Mammary epithelial cell (primary cell): ENCODE measurements at regions of chr21 and their contacts with region 1.

Region 1: GRCh38 chr21:41425954-41426675 is at the start of gene MX1:
- DNase-seq: peak; percentile 31
- H3K4me3 ChIP-seq: peak within 1 kb of the TSS; percentile 60 to 64 (median 62)
- H3K27ac ChIP-seq: no peak within 1 kb of the TSS
- H3K4me1 ChIP-seq: peaks cover 6% of the 10 kb centered on the region
- H3K27me3 ChIP-seq: no peaks in the 10 kb centered on the region
- CTCF ChIP-seq: no peak
- total RNA-seq, gene MX1: 5.3 to 10.8 TPM

Region 2: GRCh38 chr21:41133896-41134522 is 292.1 kb before region 1 on chr21:
- CTCF ChIA-PET with region 1: no interaction called
- dilution Hi-C with region 1: no loop called
- in situ Hi-C with region 1: loop called in 1 of 2 experiments (anchors 25 kb)
- intact Hi-C with region 1: no loop called
- DNase-seq: peak; percentile 23
- H3K4me3 ChIP-seq: no peak overlapping the region
- H3K27ac ChIP-seq: no peak overlapping the region
- H3K4me1 ChIP-seq: peaks cover 3% of the 10 kb centered on the region
- H3K27me3 ChIP-seq: no peaks in the 10 kb centered on the region
- CTCF ChIP-seq: peak; percentile 53 to 68

Region 3: DNA sequence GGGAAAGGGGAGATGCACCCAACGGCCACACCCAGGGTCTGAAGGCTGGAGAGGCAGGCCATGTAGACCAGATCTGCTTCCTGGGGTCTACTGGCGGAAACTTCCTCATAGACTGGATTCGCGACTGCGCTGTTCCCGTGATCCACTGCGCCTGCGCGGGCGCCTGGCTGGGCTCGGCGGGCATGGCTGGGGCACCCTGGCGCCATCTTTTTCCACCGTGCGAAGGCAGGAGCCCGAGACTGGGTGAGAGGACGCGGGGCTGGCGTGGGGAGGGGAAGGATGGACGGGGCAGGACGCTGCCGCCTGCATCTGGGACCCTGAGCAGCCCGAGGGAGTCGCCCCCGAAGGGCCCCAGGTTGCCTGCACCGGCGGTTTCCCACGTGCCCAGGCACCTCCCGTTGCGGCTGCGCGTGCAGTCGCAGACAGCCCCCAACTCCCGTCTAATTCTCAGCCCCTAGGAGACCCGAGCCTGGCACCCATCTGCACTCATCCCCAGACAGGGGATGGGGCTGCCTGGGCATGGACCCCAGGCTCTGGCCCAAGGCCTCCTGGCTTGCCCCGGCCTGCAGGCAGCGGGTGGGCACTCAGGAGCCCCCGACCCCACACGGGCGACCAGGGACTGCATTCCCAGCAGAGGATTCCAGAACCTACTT is 121.9 kb before region 1 on chr21:
- CTCF ChIA-PET with region 1: no interaction called
- dilution Hi-C with region 1: no loop called
- in situ Hi-C with region 1: no loop called
- intact Hi-C with region 1: no loop called
- DNase-seq: no peak
- H3K4me3 ChIP-seq: no peak overlapping the region
- H3K27ac ChIP-seq: no peak overlapping the region
- H3K4me1 ChIP-seq: no peaks in the 10 kb centered on the region
- H3K27me3 ChIP-seq: peaks cover 2% of the 10 kb centered on the region
- CTCF ChIP-seq: no peak

Region 4: DNA sequence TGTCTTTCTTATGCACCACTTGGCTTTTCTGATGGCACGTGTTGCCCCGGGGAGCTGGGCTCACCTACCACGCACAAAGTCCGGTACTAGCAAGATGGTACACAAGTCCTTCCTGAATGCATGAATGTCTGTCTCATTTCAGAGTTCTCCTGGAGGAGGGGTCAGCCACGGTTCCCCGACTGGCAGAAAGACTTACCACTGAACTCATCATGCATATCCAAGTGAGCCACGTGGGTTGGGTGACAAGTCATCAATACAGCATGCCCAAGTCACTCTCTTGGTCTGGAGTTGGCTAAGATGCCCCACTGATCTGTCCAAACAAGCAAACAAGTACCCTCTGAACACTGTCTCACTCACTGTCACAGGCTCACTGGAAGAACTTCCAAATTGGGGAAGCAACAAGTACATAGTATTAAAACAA is 28.6 kb before region 1 on chr21:
- CTCF ChIA-PET with region 1: no interaction called
- dilution Hi-C with region 1: no loop called
- in situ Hi-C with region 1: no loop called
- intact Hi-C with region 1: no loop called
- DNase-seq: no peak
- H3K4me3 ChIP-seq: no peak overlapping the region
- H3K27ac ChIP-seq: no peak overlapping the region
- H3K4me1 ChIP-seq: no peaks in the 10 kb centered on the region
- H3K27me3 ChIP-seq: no peaks in the 10 kb centered on the region
- CTCF ChIP-seq: no peak

Region 5: GRCh38 chr21:41491412-41491811 is 65.3 kb after region 1 on chr21:
- CTCF ChIA-PET with region 1: no interaction called
- dilution Hi-C with region 1: loop called (anchors 5 kb)
- in situ Hi-C with region 1: no loop called
- intact Hi-C with region 1: no loop called
- DNase-seq: no peak
- H3K4me3 ChIP-seq: no peak overlapping the region
- H3K27ac ChIP-seq: no peak overlapping the region
- H3K4me1 ChIP-seq: no peaks in the 10 kb centered on the region
- H3K27me3 ChIP-seq: no peaks in the 10 kb centered on the region
- CTCF ChIP-seq: no peak

Region 6: GRCh38 chr21:41508300-41509052 is 82.4 kb after region 1 on chr21:
- CTCF ChIA-PET with region 1: no interaction called
- dilution Hi-C with region 1: no loop called
- in situ Hi-C with region 1: no loop called
- intact Hi-C with region 1: no loop called
- DNase-seq: no peak
- H3K4me3 ChIP-seq: no peak overlapping the region
- H3K27ac ChIP-seq: no peak overlapping the region
- H3K4me1 ChIP-seq: no peaks in the 10 kb centered on the region
- H3K27me3 ChIP-seq: peaks cover 31% of the 10 kb centered on the region
- CTCF ChIP-seq: no peak

Region 7: DNA sequence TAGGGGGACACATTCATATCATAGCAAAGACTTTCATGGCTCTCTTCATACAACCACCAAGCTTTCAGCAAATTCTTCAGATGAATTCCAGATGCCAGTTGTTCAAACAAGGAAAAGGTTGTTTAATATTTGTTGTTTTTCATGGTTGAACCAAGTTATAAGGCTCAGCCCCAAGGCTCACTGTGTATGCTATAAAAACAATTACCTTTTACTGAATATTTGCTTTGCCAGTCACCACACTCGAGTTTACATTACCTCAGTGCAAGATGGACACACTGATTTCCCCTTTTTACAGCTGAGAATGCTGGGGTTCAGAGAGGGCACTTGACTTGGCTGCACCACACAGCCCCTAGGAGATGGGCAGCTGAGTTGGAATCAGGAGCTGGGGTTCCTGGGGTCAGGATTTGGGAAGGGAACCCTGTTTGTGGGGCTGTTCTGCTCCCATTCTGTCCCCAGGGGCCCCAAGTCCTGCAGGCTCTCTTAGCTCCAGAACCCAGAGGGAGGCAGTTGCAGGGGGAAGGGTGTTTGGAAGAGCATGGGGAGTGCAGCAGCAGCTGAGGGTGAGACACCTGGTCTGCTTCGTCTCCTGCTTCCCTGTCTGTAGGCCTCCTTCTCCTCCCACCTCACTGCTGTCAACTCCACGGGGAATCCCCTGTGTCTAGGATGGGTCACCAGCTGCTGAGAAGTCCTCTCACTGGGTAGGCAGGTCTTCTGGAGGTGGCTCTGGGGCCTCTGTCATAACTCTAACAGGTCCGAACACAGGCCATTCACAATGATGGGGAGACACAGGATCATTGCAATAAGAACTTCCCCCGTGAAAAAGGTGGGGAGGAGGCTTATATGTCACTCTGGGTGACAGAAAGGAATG is 94.7 kb after region 1 on chr21:
- CTCF ChIA-PET with region 1: no interaction called
- dilution Hi-C with region 1: no loop called
- in situ Hi-C with region 1: no loop called
- intact Hi-C with region 1: no loop called
- DNase-seq: no peak
- H3K4me3 ChIP-seq: no peak overlapping the region
- H3K27ac ChIP-seq: no peak overlapping the region
- H3K4me1 ChIP-seq: no peaks in the 10 kb centered on the region
- H3K27me3 ChIP-seq: no peaks in the 10 kb centered on the region
- CTCF ChIP-seq: no peak